CD14-positive monocyte (primary cell): ENCODE measurements at regions of chr5 and their contacts with region 1.

Region 1: GRCh38 chr5:81301271-81302015 is at the start of gene ZCCHC9:
- DNase-seq: peak; percentile 92 to 93 (median 93)
- H3K4me3 ChIP-seq: peak within 1 kb of the TSS; percentile 70 to 85 (median 82)
- H3K4me3 Mint-ChIP-seq: peak within 1 kb of the TSS; percentile 94 to 99
- H3K27ac ChIP-seq: peak within 1 kb of the TSS; percentile 78 to 95
- H3K27ac Mint-ChIP-seq: peak within 1 kb of the TSS; percentile 92 to 99 (median 94)
- H3K4me1 ChIP-seq: peaks cover 21 to 22% of the 10 kb centered on the region in 2 donors
- H3K4me1 Mint-ChIP-seq: peaks cover 29% of the 10 kb centered on the region
- H3K27me3 ChIP-seq: no peaks in the 10 kb centered on the region
- H3K27me3 Mint-ChIP-seq: peaks cover 0 to 3% (median 0%) of the 10 kb centered on the region in 3 donors
- CTCF ChIP-seq: no peak
- polyA plus RNA-seq, gene ZCCHC9: 10.6 to 15.9 (median 14.6) TPM

Region 2: DNA sequence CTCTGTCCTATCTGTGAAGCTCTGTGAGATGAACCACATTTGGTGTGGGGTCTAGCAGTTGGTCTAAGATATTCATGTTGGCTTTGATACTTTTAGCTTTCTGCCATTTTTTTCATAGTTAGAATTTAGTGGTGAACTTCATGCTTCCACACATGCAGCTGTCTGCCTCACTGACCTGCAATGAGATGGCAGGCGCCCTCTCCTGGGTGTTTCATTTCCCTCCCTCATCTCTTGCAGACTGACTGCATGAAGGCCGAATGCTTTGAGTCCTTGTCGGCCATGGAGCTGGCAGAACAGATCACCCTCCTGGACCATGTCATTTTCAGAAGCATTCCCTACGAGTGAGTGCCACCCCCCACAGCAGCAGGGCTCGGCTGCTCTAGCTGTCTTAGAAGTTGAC is 94.4 kb before region 1 on chr5:
- intact Hi-C with region 1: no loop called
- DNase-seq: no peak
- H3K4me3 ChIP-seq: no peak overlapping the region
- H3K4me3 Mint-ChIP-seq: no peak overlapping the region
- H3K27ac ChIP-seq: no peak overlapping the region
- H3K27ac Mint-ChIP-seq: no peak overlapping the region
- H3K4me1 ChIP-seq: no peaks in the 10 kb centered on the region
- H3K4me1 Mint-ChIP-seq: no peaks in the 10 kb centered on the region
- H3K27me3 ChIP-seq: no peaks in the 10 kb centered on the region
- H3K27me3 Mint-ChIP-seq: peaks cover 0 to 2% (median 2%) of the 10 kb centered on the region in 3 donors
- CTCF ChIP-seq: no peak

Region 3: GRCh38 chr5:81718300-81718699 is 416.9 kb after region 1 on chr5:
- intact Hi-C with region 1: no loop called
- DNase-seq: no peak
- H3K4me3 ChIP-seq: no peak overlapping the region
- H3K4me3 Mint-ChIP-seq: no peak overlapping the region
- H3K27ac ChIP-seq: no peak overlapping the region
- H3K27ac Mint-ChIP-seq: no peak overlapping the region
- H3K4me1 ChIP-seq: no peaks in the 10 kb centered on the region
- H3K4me1 Mint-ChIP-seq: peaks cover 17% of the 10 kb centered on the region
- H3K27me3 ChIP-seq: no peaks in the 10 kb centered on the region
- H3K27me3 Mint-ChIP-seq: no peaks in the 10 kb centered on the region
- CTCF ChIP-seq: no peak

Region 4: GRCh38 chr5:82278095-82278918 is 976.9 kb after region 1 on chr5 and contains the start of gene RPS23:
- intact Hi-C with region 1: loop called in 1 of 2 experiments (anchors 5 kb)
- DNase-seq: peak; percentile 77 to 91 (median 84)
- H3K4me3 ChIP-seq: peak within 1 kb of the TSS; percentile 70 to 87 (median 80)
- H3K4me3 Mint-ChIP-seq: peak within 1 kb of the TSS; percentile 91 to 95
- H3K27ac ChIP-seq: peak within 1 kb of the TSS; percentile 34 to 86
- H3K27ac Mint-ChIP-seq: peak within 1 kb of the TSS; percentile 89 to 99 (median 97)
- H3K4me1 ChIP-seq: peaks cover 16% of the 10 kb centered on the region in 2 donors
- H3K4me1 Mint-ChIP-seq: peaks cover 18% of the 10 kb centered on the region
- H3K27me3 ChIP-seq: no peaks in the 10 kb centered on the region
- H3K27me3 Mint-ChIP-seq: peaks cover 0 to 1% (median 0%) of the 10 kb centered on the region in 3 donors
- CTCF ChIP-seq: no peak
- polyA plus RNA-seq, gene RPS23: 1,200 to 3,765 (median 1,267) TPM